Activated naive CD4-positive, alpha-beta T cell treated with anti-CD3 and anti-CD28 coated beads for 36 hours (primary cell): ENCODE measurements at regions of chr7 and their contacts with region 1.

Region 1: DNA sequence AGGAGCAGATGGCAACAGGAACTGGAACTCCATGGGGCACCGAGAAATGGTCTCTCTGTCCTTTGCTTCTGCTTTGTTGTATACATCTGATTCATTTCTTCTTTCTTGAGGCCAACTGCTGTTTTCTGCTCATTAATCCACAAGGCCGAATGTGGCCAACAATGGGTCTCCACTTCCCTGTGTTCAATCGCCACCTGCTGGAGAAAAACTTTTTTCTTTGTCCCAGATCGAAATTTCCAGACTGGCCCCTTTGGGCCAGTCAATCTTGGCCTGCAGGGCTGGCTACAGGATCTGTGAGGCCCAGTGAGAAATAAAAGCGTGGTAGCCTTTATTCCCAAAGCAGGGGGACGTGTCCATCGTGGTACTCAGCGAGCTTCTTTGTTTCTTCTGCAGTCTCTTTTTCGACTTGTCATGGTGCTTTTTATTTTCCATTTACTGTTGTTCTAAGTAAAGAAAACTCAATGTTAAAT is 58.8 kb downstream of the PARP12 start:
- DNase-seq: peak; percentile 40
- H3K4me3 Mint-ChIP-seq: no peak overlapping the region
- H3K27ac Mint-ChIP-seq: no peak overlapping the region
- H3K4me1 Mint-ChIP-seq: no peaks in the 10 kb centered on the region
- H3K27me3 Mint-ChIP-seq: no peaks in the 10 kb centered on the region

Region 2: DNA sequence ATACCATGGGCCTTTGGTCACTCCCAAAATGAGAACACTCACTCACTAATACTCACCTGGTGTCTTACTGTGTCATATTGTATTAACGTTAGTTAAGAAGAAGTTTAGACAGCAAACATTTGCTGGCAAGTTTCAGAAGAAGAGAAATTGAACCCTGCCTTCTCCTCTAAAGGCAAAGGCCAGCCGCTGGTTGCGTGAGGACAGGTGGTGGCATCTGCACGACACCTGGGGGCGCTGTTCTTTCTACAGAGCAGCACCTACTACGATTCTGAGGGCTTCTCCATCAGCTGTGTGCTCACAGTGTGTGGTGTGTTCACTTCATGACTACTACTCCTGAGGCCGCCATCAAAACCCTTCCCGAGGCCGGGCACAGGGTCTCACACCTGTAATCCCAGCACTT is 498.4 kb before region 1 on chr7:
- CTCF ChIA-PET with region 1: no interaction called
- intact Hi-C with region 1: loop called (anchors 1 kb)
- DNase-seq: peak; percentile 50
- H3K4me3 Mint-ChIP-seq: no peak overlapping the region
- H3K27ac Mint-ChIP-seq: no peak overlapping the region
- H3K4me1 Mint-ChIP-seq: no peaks in the 10 kb centered on the region
- H3K27me3 Mint-ChIP-seq: no peaks in the 10 kb centered on the region

Region 3: GRCh38 chr7:139620676-139621344 is 383.1 kb before region 1 on chr7:
- CTCF ChIA-PET with region 1: interaction called, 15 read pairs
- intact Hi-C with region 1: loop called (anchors 1 kb)
- DNase-seq: peak; percentile 77
- H3K4me3 Mint-ChIP-seq: no peak overlapping the region
- H3K27ac Mint-ChIP-seq: no peak overlapping the region
- H3K4me1 Mint-ChIP-seq: peaks cover 21% of the 10 kb centered on the region
- H3K27me3 Mint-ChIP-seq: no peaks in the 10 kb centered on the region

Region 4: DNA sequence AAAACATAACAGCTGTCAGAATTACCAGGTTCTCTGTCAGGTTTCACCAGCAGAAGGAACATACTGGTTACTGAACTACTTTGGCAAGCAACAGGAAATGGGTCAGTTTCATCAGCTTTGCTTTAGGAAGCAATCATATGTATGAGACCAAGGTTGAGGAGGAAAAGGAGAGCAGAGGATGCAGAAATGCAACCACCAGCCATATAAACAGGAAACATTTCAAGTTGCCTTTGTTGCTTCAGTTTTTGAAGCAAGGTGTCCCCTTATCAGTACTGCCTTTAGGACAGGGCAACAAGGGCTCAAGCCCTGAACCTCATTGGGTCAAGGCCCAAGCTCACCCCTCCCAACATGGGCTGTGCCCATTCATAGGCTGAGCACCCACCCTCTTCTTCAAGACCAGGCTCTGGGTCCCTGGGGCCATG is 236.4 kb before region 1 on chr7:
- CTCF ChIA-PET with region 1: no interaction called
- intact Hi-C with region 1: loop called (anchors 5 kb)
- DNase-seq: peak; percentile 38
- H3K4me3 Mint-ChIP-seq: no peak overlapping the region
- H3K27ac Mint-ChIP-seq: peak overlapping the region; percentile 73
- H3K4me1 Mint-ChIP-seq: peaks cover 76% of the 10 kb centered on the region
- H3K27me3 Mint-ChIP-seq: no peaks in the 10 kb centered on the region

Region 5: GRCh38 chr7:140304191-140304799 is 300.3 kb after region 1 on chr7:
- CTCF ChIA-PET with region 1: interaction called, 4 read pairs
- intact Hi-C with region 1: loop called (anchors 1 kb)
- DNase-seq: peak; percentile 55
- H3K4me3 Mint-ChIP-seq: no peak overlapping the region
- H3K27ac Mint-ChIP-seq: peak overlapping the region; percentile 90
- H3K4me1 Mint-ChIP-seq: peaks cover 7% of the 10 kb centered on the region
- H3K27me3 Mint-ChIP-seq: no peaks in the 10 kb centered on the region